Activated CD4-positive, alpha-beta T cell treated with anti-CD3 and anti-CD28 coated beads for 36 hours (primary cell): ENCODE measurements at regions of chr9 and their contacts with region 1.

Region 1: DNA sequence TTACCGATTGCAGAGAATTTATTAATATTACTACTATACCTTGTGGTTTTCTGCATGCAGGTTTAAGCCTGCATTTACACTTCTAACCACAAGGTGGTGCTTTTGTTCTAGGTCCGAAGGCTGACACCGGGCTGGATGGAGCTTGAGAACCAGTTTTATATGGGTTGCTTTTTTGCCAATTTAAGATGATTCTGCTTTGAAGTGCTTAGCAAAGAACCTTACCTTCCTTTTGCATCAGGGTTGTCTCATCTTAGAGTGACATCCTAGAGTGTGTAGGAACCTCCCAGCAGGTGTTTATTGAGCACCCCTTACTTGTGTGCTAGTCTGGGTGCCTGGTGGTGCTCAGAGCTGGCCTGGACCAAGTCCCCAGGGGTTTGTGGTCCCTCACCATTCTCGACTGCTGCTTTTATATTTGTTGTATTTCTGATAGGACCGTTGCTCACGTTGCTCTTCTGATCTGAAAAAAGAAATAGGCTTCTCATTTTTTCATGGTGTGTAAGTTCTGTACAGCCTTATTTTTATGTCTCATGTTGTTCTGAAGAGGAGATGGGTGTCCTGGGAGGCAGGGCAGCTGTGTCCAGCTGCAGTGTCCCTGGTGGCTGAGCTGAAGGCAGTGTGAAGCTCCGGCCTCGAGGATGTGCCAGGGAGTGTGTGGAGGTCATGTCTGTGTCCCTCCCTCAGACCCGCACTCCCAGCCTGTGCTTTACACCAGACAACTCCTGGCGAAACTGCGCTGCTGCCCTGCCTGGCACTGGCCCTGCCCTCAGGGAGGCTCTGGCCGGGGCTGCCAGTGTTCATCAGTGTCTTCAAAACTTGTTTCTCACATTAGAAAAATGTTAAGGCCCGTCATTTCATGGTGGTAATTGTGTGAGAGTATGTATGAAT is 54.3 kb downstream of the EHMT1 start:
- DNase-seq: peak; percentile 65
- ATAC-seq: peak; percentile 82
- H3K4me3 Mint-ChIP-seq: no peak overlapping the region
- H3K27ac Mint-ChIP-seq: peak overlapping the region; percentile 43
- H3K4me1 Mint-ChIP-seq: peaks cover 30% of the 10 kb centered on the region
- H3K27me3 Mint-ChIP-seq: no peaks in the 10 kb centered on the region

Region 2: GRCh38 chr9:137626464-137626863 is 46.7 kb before region 1 on chr9:
- CTCF ChIA-PET with region 1: interaction called, 10 read pairs
- POLR2A ChIA-PET with region 1: interaction called, 4 read pairs
- intact Hi-C with region 1: no loop called
- DNase-seq: no peak
- ATAC-seq: no peak
- H3K4me3 Mint-ChIP-seq: peak overlapping the region; percentile 4
- H3K27ac Mint-ChIP-seq: peak overlapping the region; percentile 65
- H3K4me1 Mint-ChIP-seq: peaks cover 58% of the 10 kb centered on the region
- H3K27me3 Mint-ChIP-seq: no peaks in the 10 kb centered on the region

Region 3: GRCh38 chr9:137694967-137695879 is 22.1 kb after region 1 on chr9:
- CTCF ChIA-PET with region 1: interaction called, 11 read pairs
- POLR2A ChIA-PET with region 1: no interaction called
- intact Hi-C with region 1: no loop called
- DNase-seq: peak; percentile 44
- ATAC-seq: peak; percentile 71
- H3K4me3 Mint-ChIP-seq: no peak overlapping the region
- H3K27ac Mint-ChIP-seq: no peak overlapping the region
- H3K4me1 Mint-ChIP-seq: peaks cover 48% of the 10 kb centered on the region
- H3K27me3 Mint-ChIP-seq: no peaks in the 10 kb centered on the region

Region 4: GRCh38 chr9:137772281-137772873 is 99.2 kb after region 1 on chr9:
- CTCF ChIA-PET with region 1: interaction called, 7 read pairs
- POLR2A ChIA-PET with region 1: no interaction called
- intact Hi-C with region 1: loop called in 1 of 2 experiments (anchors 5 kb)
- DNase-seq: peak; percentile 24
- ATAC-seq: no peak
- H3K4me3 Mint-ChIP-seq: no peak overlapping the region
- H3K27ac Mint-ChIP-seq: no peak overlapping the region
- H3K4me1 Mint-ChIP-seq: no peaks in the 10 kb centered on the region
- H3K27me3 Mint-ChIP-seq: no peaks in the 10 kb centered on the region

Region 5: GRCh38 chr9:138022121-138022741 is 349.1 kb after region 1 on chr9:
- CTCF ChIA-PET with region 1: interaction called, 3 read pairs
- POLR2A ChIA-PET with region 1: no interaction called
- intact Hi-C with region 1: loop called in 1 of 2 experiments (anchors 1 kb)
- DNase-seq: peak; percentile 60
- ATAC-seq: peak; percentile 74
- H3K4me3 Mint-ChIP-seq: no peak overlapping the region
- H3K27ac Mint-ChIP-seq: no peak overlapping the region
- H3K4me1 Mint-ChIP-seq: no peaks in the 10 kb centered on the region
- H3K27me3 Mint-ChIP-seq: peaks cover 18% of the 10 kb centered on the region

Region 6: DNA sequence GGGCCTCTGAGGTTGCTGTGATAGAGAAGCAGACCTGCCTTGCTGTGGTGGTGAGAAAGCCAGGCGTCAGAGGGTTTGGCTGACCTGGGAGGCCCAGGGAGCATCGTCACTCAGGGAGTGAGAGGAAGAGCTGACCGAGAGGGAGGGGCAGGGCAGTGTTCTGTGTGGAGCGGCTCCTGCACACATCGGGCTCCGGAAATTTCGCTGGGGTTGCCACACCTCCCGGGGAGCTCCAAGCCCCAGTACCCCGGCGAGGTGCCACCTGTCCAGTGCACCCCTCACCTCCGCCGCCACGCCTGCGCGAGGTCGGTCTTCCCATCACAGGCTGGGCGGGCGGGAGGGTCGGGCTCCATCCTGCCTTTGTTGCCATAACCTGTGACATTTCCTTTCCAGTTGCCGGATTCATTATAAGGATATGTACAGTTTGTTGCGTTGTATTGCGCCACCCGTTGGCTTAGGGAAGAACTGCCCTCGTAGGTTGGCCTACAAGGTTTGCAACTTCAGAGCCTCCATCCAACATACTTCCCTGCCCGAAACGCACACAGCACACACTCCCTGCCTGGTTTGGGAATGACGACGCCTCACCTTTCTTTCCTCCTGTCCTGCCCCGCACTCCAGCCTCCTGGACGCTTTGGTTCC is 427.7 kb after region 1 on chr9:
- CTCF ChIA-PET with region 1: no interaction called
- POLR2A ChIA-PET with region 1: no interaction called
- intact Hi-C with region 1: loop called in 1 of 2 experiments (anchors 2 kb)
- DNase-seq: peak; percentile 30
- ATAC-seq: no peak
- H3K4me3 Mint-ChIP-seq: no peak overlapping the region
- H3K27ac Mint-ChIP-seq: no peak overlapping the region
- H3K4me1 Mint-ChIP-seq: no peaks in the 10 kb centered on the region
- H3K27me3 Mint-ChIP-seq: no peaks in the 10 kb centered on the region